CD8-positive, alpha-beta T cell (primary cell): ENCODE measurements at regions of chr13 and their contacts with region 1.

Region 1: DNA sequence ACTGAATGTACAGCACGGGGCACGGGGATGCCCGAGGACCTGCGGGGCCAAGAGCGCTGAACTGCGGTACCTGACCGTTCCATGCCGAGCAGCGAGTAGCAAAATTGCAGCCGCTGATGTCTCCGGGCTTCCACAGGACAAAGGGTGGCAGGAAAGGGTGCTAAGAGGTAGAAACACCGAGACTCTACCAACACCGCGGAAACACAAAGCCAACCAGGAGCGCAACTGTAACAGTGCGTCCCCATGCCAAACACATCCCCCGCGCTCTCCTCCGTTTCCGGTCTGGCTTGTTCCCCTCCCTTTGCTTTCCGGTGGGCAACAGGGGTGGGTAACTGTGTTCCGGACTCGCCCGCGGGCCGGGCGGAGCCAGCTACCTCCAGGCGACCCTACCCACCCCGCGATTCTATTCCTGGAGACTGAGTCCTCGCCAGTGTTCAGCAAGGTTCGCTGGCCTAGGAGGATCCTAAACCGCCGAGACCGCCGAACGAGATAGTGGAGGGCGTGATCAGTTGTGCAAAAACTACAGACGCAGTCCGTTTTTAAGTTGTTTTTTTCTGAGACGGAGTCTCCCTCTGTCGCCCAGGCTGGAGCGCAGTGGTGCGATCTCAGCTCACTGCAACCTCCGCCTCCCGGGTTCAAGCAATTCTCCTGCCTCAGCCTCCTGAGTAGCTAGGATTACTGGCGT is 34.9 kb upstream of the NEK3 start:
- DNase-seq: peak; percentile 81 to 95 (median 86)
- ATAC-seq: peak; percentile 85
- H3K4me3 ChIP-seq: peak overlapping the region; percentile 76 to 87
- H3K4me3 Mint-ChIP-seq: peak overlapping the region; percentile 98
- H3K27ac ChIP-seq: peak overlapping the region; percentile 64 to 65
- H3K27ac Mint-ChIP-seq: peak overlapping the region; percentile 98
- H3K4me1 ChIP-seq: peaks cover 16% of the 10 kb centered on the region
- H3K4me1 Mint-ChIP-seq: peaks cover 39% of the 10 kb centered on the region
- H3K27me3 ChIP-seq: no peaks in the 10 kb centered on the region
- H3K27me3 Mint-ChIP-seq: no peaks in the 10 kb centered on the region
- CTCF ChIP-seq: no peak

Region 2: GRCh38 chr13:51330791-51331190 is 863.5 kb before region 1 on chr13:
- CTCF ChIA-PET with region 1: no interaction called
- POLR2A ChIA-PET with region 1: no interaction called
- intact Hi-C with region 1: no loop called
- DNase-seq: no peak
- ATAC-seq: no peak
- H3K4me3 ChIP-seq: no peak overlapping the region
- H3K4me3 Mint-ChIP-seq: no peak overlapping the region
- H3K27ac ChIP-seq: no peak overlapping the region
- H3K27ac Mint-ChIP-seq: no peak overlapping the region
- H3K4me1 ChIP-seq: no peaks in the 10 kb centered on the region
- H3K4me1 Mint-ChIP-seq: peaks cover 15% of the 10 kb centered on the region
- H3K27me3 ChIP-seq: no peaks in the 10 kb centered on the region
- H3K27me3 Mint-ChIP-seq: no peaks in the 10 kb centered on the region
- CTCF ChIP-seq: no peak

Region 3: GRCh38 chr13:51583875-51584730 is 610.2 kb before region 1 on chr13 and contains the start of gene WDFY2:
- CTCF ChIA-PET with region 1: no interaction called
- POLR2A ChIA-PET with region 1: no interaction called
- intact Hi-C with region 1: loop called in 1 of 2 experiments (anchors 5 kb)
- DNase-seq: peak; percentile 98 to 100 (median 99)
- ATAC-seq: peak; percentile 82
- H3K4me3 ChIP-seq: peak within 1 kb of the TSS; percentile 71 to 81
- H3K4me3 Mint-ChIP-seq: peak within 1 kb of the TSS; percentile 99
- H3K27ac ChIP-seq: peak within 1 kb of the TSS; percentile 83 to 89
- H3K27ac Mint-ChIP-seq: peak within 1 kb of the TSS; percentile 100
- H3K4me1 ChIP-seq: peaks cover 11% of the 10 kb centered on the region
- H3K4me1 Mint-ChIP-seq: peaks cover 35% of the 10 kb centered on the region
- H3K27me3 ChIP-seq: no peaks in the 10 kb centered on the region
- H3K27me3 Mint-ChIP-seq: no peaks in the 10 kb centered on the region
- CTCF ChIP-seq: no peak
- total RNA-seq, gene WDFY2: 17.2 to 18.6 TPM

Region 4: GRCh38 chr13:52001120-52001731 is 193.1 kb before region 1 on chr13:
- CTCF ChIA-PET with region 1: interaction called, 6 read pairs
- POLR2A ChIA-PET with region 1: no interaction called
- intact Hi-C with region 1: loop called in 1 of 2 experiments (anchors 2 kb)
- DNase-seq: peak in 2 of 9 experiments; percentile 50 to 62
- ATAC-seq: peak; percentile 90
- H3K4me3 ChIP-seq: no peak overlapping the region
- H3K4me3 Mint-ChIP-seq: no peak overlapping the region
- H3K27ac ChIP-seq: no peak overlapping the region
- H3K27ac Mint-ChIP-seq: no peak overlapping the region
- H3K4me1 ChIP-seq: no peaks in the 10 kb centered on the region
- H3K4me1 Mint-ChIP-seq: no peaks in the 10 kb centered on the region
- H3K27me3 ChIP-seq: no peaks in the 10 kb centered on the region
- H3K27me3 Mint-ChIP-seq: peaks cover 18% of the 10 kb centered on the region
- CTCF ChIP-seq: peak; percentile 66

Region 5: DNA sequence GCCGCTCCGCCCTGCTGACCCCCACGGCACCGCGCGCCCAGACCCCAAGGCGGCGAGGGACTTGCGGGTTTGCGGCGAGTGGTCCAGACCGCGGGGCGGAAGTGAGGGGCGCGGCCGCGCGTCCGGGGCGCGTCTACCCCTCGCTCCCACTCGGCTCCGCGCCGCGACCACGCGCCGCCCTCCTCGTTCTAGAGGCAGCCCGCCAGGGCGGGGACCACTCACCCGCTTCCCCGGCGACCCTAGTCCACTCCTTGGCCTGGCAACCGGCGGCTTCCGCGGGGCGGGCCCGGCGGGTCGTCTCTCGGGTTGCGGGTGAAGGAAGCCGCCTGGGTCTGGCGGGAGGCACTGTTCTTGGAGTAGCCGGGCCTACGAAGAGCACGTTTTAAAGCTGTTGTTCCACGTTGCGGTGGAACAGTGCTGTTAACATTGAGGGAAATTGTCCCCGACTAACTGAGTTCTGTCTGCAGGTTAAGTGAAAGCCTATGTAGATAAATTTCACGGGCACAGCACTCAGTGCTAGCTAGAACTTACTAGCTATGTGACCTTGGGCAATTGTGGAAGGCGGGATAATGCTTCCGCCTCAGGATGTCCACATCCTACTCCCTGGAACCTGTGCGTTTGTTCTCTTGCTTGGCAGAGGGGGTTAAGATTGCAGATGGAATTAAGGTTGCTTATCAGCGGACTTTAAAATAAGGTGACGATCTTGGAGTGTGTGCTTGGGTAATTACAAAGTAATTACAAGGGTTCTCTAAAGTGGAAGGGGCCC is 34.8 kb before region 1 on chr13 and contains the start of gene NEK3:
- CTCF ChIA-PET with region 1: no interaction called
- POLR2A ChIA-PET with region 1: interaction called, 8 read pairs
- intact Hi-C with region 1: loop called in 1 of 2 experiments (anchors 1 kb)
- DNase-seq: peak in 8 of 9 experiments; percentile 25 to 75 (median 49)
- ATAC-seq: peak; percentile 81
- H3K4me3 ChIP-seq: peak within 1 kb of the TSS; percentile 59 to 63
- H3K4me3 Mint-ChIP-seq: peak within 1 kb of the TSS; percentile 89
- H3K27ac ChIP-seq: no peak within 1 kb of the TSS
- H3K27ac Mint-ChIP-seq: peak within 1 kb of the TSS; percentile 52
- H3K4me1 ChIP-seq: peaks cover 14% of the 10 kb centered on the region
- H3K4me1 Mint-ChIP-seq: peaks cover 29% of the 10 kb centered on the region
- H3K27me3 ChIP-seq: no peaks in the 10 kb centered on the region
- H3K27me3 Mint-ChIP-seq: no peaks in the 10 kb centered on the region
- CTCF ChIP-seq: no peak
- total RNA-seq, gene NEK3: 1.0 to 1.7 TPM

Region 6: GRCh38 chr13:52169839-52170238 is 24.5 kb before region 1 on chr13:
- CTCF ChIA-PET with region 1: no interaction called
- POLR2A ChIA-PET with region 1: no interaction called
- intact Hi-C with region 1: no loop called
- DNase-seq: no peak
- ATAC-seq: no peak
- H3K4me3 ChIP-seq: no peak overlapping the region
- H3K4me3 Mint-ChIP-seq: no peak overlapping the region
- H3K27ac ChIP-seq: no peak overlapping the region
- H3K27ac Mint-ChIP-seq: no peak overlapping the region
- H3K4me1 ChIP-seq: no peaks in the 10 kb centered on the region
- H3K4me1 Mint-ChIP-seq: no peaks in the 10 kb centered on the region
- H3K27me3 ChIP-seq: no peaks in the 10 kb centered on the region
- H3K27me3 Mint-ChIP-seq: no peaks in the 10 kb centered on the region
- CTCF ChIP-seq: no peak